Posterior vena cava (tissue), 2 donors: ENCODE measurements at regions of chr3 and their contacts with region 1.

Region 1: DNA sequence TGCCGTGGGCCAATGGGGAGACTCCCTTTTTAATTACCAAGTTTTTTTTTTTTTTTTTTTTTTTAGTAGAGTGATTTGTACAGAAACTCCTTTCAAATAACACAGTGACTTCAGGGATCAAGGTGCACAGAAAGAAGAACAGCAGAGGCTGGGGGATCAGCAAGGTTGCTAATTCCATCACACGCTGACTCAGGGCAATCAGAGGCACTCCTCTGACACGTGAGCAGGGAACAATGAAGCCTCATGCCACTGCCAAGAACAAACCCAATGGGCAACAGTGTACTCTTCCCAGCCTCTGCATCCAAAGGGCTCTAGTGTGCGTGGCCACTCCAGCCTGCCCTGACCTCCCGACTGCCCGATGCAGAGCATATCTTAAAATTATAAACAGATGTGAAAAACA is 186.7 kb upstream of the WNT5A start:
- DNase-seq: no peak

Region 2: DNA sequence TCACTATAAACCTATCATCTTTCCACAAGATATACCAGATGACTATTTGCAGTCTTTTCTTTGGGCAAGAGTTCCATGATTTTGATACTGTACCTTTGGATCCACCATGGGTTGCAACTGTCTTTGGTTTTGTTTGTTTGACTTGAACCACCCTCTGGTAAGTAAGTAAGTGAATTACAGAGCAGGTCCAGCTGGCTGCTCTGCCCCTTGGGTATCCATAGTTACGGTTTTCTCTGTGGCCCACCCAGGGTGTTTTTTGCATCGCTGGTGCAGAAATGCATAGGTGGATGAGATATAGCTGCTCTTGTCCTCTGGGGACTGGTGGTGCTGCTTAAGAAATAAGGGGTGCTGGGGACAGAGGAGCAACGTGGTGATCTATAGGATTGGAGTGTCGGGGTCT is 1861.3 kb before region 1 on chr3:
- intact Hi-C with region 1: loop called in 1 of 2 experiments (anchors 5 kb)
- DNase-seq: no peak

Region 3: GRCh38 chr3:55716611-55717225 is 43.0 kb after region 1 on chr3:
- intact Hi-C with region 1: loop called in 1 of 2 experiments (anchors 1 kb)
- DNase-seq: no peak

Region 4: DNA sequence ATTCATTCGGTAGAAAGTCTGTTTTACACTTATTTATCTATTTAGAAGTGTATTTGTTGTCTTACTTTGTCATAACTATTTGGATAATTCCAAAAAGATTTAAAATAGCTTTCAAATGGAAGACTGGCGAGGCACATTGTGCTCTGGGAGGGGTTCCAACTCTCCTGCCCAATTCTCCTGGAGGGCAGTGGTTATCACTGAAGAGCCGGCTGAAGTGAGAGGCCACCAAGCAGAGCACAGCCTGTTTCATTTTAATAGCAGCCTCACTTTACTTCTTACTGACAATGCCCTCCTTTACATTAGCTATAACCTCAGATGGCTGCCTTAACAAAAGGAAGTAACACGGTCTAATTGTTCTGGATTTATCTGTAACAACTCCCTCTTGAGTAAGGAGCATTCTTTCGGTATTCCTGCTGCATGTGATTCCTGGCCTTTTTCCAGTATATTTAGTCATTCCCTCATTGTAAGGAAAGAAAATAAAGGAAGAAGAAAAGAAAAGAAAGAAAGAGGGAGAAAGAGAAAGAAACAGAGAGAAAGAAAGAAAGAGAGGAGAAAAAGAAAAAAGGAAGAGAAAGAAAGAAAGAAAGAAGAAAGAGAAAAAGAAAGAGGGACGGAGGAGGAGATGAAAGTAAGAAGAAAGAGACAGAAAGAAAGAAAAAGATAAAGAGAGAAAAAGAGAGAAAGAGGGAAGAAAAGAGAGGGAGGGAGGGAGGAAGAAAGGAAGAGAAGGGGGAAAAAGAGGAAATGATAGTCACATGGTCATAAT is 153.2 kb after region 1 on chr3:
- intact Hi-C with region 1: no loop called
- DNase-seq: no peak